Cardiac septum (tissue), 1 donor: ENCODE measurements at regions of chr13 and their contacts with region 1.

Region 1: DNA sequence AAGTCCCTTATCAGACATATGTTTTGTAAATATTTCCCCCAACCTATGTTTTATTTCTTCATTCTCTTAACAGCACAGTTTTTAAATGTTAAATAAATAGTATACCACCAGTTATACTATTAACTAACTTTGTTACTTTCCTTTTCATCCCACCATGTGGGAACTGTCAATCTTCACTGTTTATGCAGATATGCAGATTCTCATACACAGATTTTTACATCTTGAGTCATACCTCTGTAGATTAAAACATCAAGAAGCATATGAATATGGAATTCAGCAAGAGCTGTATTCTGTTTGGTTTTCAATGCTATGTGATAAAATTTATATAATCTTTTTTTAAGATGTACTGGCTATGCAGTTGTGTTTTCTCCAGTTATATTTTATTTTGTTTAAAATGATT is 566.3 kb downstream of the LIG4 start:
- DNase-seq: no peak

Region 2: GRCh38 chr13:107205303-107206104 is 443.6 kb before region 1 on chr13:
- intact Hi-C with region 1: loop called (anchors 5 kb)
- DNase-seq: peak; percentile 82

Region 3: DNA sequence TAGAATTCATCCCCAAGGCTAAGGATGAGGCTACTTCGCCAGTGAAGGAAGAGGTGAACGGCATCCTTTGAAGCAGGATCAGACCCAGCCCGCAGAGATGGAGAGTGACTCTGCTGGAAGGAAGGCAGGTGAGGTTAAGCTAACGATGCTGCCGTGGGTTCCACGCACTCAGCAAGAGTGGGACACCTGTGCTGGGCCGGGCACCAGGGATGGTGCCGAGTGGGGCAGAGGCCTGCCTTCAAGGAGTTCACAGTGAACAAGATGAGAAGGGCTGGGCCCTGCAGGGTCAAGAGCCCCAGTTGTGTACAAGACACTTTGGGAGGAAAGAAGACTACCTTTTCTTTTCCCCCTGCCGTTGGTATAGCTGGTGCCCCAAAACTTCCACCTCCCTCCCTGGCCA is 40.3 kb before region 1 on chr13:
- intact Hi-C with region 1: no loop called
- DNase-seq: no peak

Region 4: DNA sequence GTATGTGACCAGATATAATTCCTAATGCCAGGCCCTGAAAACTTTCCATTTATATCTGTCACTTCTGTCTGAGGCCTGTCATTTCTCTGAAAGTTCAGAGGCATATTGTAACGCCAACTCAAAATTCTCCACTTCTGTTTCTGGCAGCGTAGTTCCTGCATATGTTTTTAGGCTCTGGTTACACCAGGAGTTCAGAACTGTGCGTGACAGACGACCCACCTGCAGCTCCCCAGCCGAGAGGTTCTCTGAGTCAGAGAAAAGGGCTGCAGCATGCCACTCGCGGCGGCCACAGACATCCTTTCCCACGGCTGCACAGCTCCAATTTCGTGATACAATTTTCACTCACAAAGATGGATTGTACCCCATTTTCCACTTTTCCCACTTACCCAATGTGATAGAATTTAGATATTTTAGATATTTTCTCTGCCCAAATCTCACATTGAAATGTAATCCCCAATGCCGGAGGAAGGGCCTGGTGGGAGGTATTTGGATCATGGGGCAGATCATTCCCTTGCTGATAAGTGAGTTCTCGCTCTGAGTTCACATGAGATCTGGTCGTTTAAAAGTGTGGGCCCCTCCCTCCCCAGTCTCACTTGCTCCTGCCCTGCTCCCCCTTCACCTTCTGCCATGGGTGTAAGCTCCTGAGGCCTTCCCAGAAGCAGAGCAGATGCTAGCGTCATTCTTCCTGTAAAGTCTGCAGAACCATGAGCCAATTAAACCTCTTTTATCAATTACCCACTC is 258.2 kb after region 1 on chr13:
- intact Hi-C with region 1: no loop called
- DNase-seq: no peak

Region 5: GRCh38 chr13:108595436-108596274 is 946.6 kb after region 1 on chr13:
- intact Hi-C with region 1: no loop called
- DNase-seq: no peak